Ovary (tissue), 10 donors: ENCODE measurements at regions of chr3 and their contacts with region 1.

Region 1: DNA sequence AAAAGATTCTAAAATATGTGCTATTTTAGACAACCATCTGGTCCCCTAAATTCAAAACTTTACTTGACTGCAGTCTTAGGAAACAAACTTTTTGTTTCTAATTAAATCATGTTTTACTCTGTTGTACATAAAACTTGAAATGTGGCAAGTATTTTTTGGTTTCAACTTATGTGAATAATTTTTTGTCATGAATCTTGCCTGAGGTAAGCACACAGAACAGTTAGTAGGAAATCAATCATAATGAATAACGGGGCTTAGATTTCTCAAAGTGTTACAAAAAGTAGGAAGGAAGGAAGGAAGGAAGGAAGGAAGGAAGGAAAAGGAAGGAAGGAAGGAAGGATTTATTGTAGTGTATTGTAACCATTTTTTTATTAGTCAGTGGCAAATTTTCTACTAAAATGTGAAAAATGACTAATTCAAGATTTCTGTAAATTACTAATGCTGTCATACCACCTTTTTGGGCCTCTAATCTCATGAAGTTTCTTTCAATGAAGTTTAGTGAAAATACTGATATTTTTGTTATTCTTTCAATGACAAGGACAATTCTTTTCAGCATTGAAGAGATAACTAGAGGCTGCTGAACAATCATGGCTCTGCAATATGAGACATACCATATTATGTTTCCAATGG is 1689.2 kb downstream of the OTOL1 start:
- DNase-seq: no peak
- H3K4me3 ChIP-seq: no peak overlapping the region
- H3K27ac ChIP-seq: no peak overlapping the region
- H3K4me1 ChIP-seq: no peaks in the 10 kb centered on the region
- H3K27me3 ChIP-seq: no peaks in the 10 kb centered on the region
- CTCF ChIP-seq: no peak
- EP300 ChIP-seq: no peak
- POLR2A ChIP-seq: no peak

Region 2: GRCh38 chr3:163261056-163261455 is 75.2 kb after region 1 on chr3:
- intact Hi-C with region 1: loop called in 1 of 4 experiments (anchors 2 kb)
- DNase-seq: no peak
- H3K4me3 ChIP-seq: no peak overlapping the region
- H3K27ac ChIP-seq: no peak overlapping the region
- H3K4me1 ChIP-seq: no peaks in the 10 kb centered on the region
- H3K27me3 ChIP-seq: no peaks in the 10 kb centered on the region
- CTCF ChIP-seq: no peak
- EP300 ChIP-seq: no peak
- POLR2A ChIP-seq: no peak